ENCODE measurements at regions of chr3 and their contacts with region 1.

Region 1: DNA sequence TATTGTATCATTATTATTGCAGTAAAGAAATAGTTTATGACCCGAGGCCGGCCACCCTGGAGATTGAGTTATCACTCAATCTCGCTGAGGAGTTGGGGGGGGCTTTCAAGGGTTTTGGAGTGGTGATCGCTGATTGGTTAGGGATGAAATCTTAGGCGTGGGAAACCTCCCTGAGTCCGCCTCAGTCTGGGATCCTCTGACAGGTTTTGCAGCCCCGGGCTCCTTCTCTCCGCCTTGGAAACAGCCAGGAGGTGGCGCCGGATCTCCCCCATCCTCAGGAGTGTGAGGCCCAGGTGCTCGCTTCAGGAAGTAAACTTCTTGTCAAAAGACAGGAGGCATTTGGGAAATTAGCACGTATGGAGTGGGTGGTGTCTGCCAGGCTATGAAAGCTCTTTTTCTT is 41.1 kb upstream of the SEC61A1 start:
- DNase-seq: no peak
- ATAC-seq: peak; percentile 84
- H3K4me3 ChIP-seq: peak overlapping the region in 1 of 2 experiments; percentile 11; a peak in 1 of 4 replicates
- H3K27ac ChIP-seq: no peak overlapping the region
- H3K4me1 ChIP-seq: no peaks in the 10 kb centered on the region
- H3K27me3 ChIP-seq: no peaks in the 10 kb centered on the region
- CTCF ChIP-seq: peak; percentile 78

Region 2: DNA sequence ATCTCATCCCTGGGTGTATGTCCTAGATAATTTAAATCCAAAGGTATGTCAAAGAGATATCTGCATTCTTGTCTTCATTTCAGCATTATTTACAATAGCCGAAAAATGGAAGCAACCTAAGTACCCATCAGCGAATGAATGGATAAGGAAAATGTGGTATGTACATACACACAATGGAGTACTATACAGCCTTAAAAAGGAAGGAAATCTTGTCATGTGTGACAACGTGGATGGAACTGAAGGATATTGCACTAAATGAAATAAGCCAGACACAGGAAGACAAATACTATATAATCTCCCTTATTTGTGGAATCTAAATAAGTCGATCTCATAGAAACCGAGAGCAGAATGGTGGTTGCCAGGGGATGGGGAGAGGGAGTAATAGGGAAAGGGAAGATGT is 172.0 kb before region 1 on chr3:
- CTCF ChIA-PET with region 1: interaction called, 11 read pairs
- POLR2A ChIA-PET with region 1: no interaction called
- in situ Hi-C with region 1: no loop called
- intact Hi-C with region 1: no loop called
- DNase-seq: no peak
- ATAC-seq: no peak
- H3K4me3 ChIP-seq: no peak overlapping the region
- H3K27ac ChIP-seq: no peak overlapping the region
- H3K4me1 ChIP-seq: no peaks in the 10 kb centered on the region
- H3K27me3 ChIP-seq: no peaks in the 10 kb centered on the region
- CTCF ChIP-seq: no peak

Region 3: DNA sequence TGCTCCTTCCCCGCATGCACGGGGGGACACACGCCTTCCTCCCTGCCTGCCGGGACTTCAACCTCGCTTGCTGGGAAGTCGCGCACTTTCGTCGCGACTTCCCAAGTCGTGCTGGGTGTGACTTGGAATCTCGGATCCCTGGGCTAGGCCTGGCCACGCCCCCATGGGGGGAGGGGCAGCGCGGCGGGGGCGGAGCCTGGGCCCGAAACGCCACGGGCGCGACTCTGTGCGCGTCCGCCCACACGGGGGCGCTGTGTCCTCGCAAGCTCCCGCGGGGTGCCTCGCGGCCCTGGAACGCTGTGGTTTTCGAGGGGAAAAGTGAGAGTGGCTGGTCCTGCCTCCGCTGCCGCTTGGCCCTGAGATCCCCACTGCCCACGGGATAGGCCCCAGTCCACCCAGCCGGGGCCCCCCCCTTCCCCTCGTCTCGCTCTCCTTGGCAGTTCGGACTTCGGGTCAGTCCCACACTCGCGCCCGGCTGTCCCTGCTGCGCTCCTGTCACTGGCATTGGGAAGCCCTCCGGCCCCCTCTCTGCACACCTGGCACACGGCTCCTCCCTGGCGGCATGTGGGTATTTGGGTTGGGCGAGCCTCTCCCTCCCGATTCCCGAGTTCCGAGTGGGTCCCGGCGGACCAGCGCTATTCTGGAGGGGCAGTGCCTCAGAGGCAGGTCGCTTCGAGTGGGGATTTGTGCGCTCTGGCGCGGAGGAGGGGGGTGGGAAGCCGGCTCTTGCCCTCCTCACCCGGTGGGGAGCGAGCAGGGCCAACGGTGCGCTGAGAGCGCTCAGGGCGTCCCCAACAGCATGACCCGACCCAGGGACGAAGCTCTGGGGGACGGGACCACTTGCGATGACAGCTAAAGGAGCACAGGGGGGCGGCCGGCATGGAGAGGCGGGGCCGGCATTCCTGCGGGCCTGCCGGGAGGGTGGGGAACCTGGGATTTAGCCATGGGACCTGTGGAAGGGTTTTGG is 64.7 kb after region 1 on chr3:
- CTCF ChIA-PET with region 1: no interaction called
- POLR2A ChIA-PET with region 1: interaction called, 18 read pairs
- in situ Hi-C with region 1: no loop called
- intact Hi-C with region 1: no loop called
- DNase-seq: no peak
- ATAC-seq: peak; percentile 83
- H3K4me3 ChIP-seq: peak overlapping the region; percentile 23 to 54
- H3K27ac ChIP-seq: peak overlapping the region; percentile 31
- H3K4me1 ChIP-seq: peaks cover 6% of the 10 kb centered on the region; the same call in 1 of the 2 replicates
- H3K27me3 ChIP-seq: no peaks in the 10 kb centered on the region
- CTCF ChIP-seq: peak; percentile 99

Region 4: DNA sequence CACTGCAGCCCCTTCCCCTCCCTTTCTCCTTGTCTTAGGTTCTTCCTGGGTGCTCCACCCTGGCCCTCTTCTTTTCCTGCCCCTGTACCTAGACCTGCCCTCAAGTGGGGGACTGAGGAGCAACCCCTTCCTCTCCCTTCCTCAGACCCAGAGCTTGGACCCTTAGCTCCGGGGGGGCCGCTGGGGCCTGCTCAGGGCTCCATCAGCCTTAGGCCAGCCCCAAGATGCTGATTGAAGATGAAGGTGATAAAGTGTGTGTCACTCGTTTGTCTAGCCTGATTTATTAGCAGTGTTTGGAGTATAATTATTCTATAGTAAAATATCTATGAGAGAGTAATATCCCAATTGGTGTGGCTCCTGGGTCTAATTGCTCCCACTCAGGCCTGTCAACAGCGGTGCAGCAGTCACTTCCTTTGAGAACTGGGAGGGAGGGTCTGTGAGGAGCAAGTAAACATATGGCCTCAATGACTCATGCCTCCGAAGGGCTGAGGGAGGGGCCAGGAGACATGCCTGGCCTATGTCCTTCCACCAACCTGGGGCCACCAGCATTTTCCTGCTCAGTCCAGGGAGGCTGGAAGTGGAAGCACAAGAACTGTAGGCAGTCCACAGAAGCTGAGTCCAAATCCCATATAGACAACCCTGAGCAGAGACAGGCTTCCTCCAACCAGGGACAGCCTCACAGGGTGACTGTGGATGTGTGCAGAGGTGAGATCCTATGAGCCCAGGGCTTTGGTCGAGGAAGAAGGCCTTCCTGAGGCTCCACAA is 332.3 kb after region 1 on chr3:
- CTCF ChIA-PET with region 1: no interaction called
- POLR2A ChIA-PET with region 1: no interaction called
- in situ Hi-C with region 1: no loop called
- intact Hi-C with region 1: no loop called
- DNase-seq: peak; percentile 7
- ATAC-seq: peak; percentile 69
- H3K4me3 ChIP-seq: no peak overlapping the region
- H3K27ac ChIP-seq: no peak overlapping the region
- H3K4me1 ChIP-seq: peaks cover 7% of the 10 kb centered on the region; the same call in 1 of the 2 replicates
- H3K27me3 ChIP-seq: no peaks in the 10 kb centered on the region
- CTCF ChIP-seq: no peak